GM10248 (cell line): ENCODE measurements at regions of chr13 and their contacts with region 1.

Region 1: GRCh38 chr13:32381539-32381938 is 46.4 kb downstream of the N4BP2L1 start:
- DNase-seq: peak; percentile 31
- CTCF ChIP-seq: peak; percentile 46

Region 2: DNA sequence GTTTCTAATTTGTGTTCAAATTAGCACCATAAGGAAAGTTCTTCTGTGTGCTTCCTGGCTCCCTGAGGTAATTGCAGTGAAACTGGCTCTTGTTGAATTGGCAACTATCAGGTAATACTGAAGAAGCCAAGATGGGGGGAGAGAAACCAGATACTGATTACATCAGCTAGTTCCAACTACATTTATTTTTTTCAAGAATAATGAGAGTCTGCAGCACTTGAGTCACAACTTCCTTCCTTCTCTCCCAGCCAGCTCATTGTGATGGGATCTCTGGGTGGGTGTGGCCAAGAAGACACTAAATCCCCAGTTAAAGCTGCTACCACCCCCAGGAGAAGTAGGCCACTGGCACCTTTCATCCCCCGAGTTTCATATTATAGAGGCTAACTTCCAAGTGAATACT is 743.0 kb before region 1 on chr13:
- CTCF ChIA-PET with region 1: no interaction called
- POLR2A ChIA-PET with region 1: no interaction called
- DNase-seq: no peak
- CTCF ChIP-seq: no peak

Region 3: DNA sequence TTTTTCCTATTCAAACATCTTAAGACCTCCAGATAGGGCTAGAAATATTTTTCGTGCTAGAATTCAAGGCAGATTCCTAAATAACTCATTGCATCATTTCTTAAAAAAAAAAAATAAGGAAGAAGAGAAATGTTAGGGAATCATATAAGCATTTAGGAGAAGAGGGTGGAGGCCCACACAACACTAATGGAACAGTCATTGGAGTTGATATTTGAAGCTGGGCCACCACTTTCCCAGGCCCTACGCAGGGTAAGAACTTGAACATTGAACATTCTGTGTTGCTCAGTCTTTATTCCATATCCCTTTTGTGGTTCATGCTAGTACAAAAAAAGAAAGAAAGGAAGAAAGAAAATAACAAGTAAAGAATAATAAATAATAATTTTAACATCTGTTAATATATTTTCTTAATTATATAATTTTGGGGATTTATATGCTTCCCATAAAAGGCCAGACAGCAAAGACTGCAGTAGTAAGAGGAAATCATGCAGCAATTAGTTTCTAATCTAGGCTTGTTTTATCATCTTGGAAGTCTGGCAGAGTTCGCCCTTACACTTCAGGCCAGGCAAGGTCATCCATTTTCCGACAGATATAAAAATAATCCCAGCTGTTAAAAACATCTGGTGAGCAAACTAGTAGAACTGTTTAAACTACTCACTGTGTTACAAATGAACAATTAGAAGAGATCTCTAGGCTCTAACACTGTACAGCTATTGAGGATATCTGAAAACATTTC is 222.2 kb before region 1 on chr13:
- CTCF ChIA-PET with region 1: no interaction called
- POLR2A ChIA-PET with region 1: no interaction called
- DNase-seq: no peak
- CTCF ChIP-seq: no peak

Region 4: GRCh38 chr13:32397896-32398295 is 16.4 kb after region 1 on chr13:
- CTCF ChIA-PET with region 1: interaction called, 20 read pairs
- POLR2A ChIA-PET with region 1: no interaction called
- DNase-seq: no peak
- CTCF ChIP-seq: no peak

Region 5: DNA sequence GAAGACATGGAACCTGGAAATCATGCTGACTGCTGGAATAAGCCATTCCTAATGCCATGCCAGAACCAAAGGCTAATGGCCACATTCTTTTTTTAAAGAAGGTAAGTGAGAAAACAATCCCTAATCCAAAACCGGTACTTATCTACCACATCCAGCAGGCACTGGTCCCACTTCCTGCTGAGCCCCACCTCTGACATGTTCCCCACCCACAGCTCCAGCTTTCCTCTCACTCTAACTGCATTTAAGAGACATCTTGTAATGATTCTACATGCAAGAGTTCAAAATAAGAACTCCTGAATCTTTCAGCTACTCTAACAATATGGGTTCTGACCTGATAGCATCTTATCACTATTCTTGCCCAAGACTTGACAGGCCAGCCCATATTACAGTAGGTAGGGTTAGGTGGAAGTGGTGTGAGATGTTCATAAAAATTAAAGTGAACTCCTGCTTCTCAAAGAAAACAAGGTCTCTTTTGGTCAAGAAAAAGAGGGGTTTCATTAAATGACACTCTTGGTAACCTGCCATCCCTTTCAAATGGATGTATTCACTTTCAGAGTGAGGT is 115.1 kb after region 1 on chr13:
- CTCF ChIA-PET with region 1: no interaction called
- POLR2A ChIA-PET with region 1: no interaction called
- DNase-seq: no peak
- CTCF ChIP-seq: no peak

Region 6: DNA sequence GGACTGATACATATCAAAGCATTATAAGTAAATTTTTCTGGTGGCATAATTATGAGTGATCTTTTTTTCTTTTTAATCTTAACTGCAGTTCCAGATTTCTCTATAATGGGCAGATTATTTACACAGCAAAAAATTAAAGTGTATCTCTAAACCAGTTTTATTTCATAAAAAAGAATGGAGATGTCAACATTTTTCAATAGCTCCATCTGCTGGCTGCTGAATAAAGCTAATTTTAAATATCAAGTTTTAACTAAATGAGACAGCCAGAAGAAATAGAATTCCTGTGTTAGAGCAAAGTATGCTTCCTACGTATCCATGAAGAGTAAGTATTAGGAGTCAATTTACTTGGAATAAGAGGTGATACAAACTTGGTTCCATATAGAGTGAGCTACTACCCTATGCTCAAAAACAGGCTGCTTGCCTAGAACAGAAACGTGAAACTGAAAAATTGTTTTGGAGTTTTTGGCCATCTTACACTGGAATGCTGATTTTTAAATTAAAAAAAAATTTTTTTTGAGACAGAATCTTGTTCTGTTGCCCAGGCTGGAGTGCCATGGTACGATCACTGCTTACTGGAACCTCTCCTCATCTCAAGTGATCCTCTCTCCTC is 199.7 kb after region 1 on chr13:
- CTCF ChIA-PET with region 1: interaction called, 53 read pairs
- POLR2A ChIA-PET with region 1: no interaction called
- DNase-seq: peak; percentile 29
- CTCF ChIP-seq: peak; percentile 37